ENCODE measurements at regions of chr5 and their contacts with region 1.

Region 1: GRCh38 chr5:172714491-172715421 is 56.2 kb downstream of the DUSP1 start:
- DNase-seq: peak; percentile 67
- ATAC-seq: peak; percentile 88
- H3K4me3 ChIP-seq: no peak overlapping the region
- H3K27ac ChIP-seq: no peak overlapping the region
- H3K4me1 ChIP-seq: peaks cover 0 to 15% of the 10 kb centered on the region in 2 experiments; a peak in 2 of 4 replicates
- H3K27me3 ChIP-seq: no peaks in the 10 kb centered on the region; the same call in 1 of the 2 replicates
- CTCF ChIP-seq: peak in 2 of 3 experiments; percentile 87 to 92; a peak in 4 of 6 replicates
- POLR2A ChIP-seq: no peak
- RAD21 ChIP-seq: no peak

Region 2: GRCh38 chr5:172770675-172771438 is 56.1 kb after region 1 on chr5 and contains the start of gene DUSP1:
- CTCF ChIA-PET with region 1: interaction called, 19 read pairs
- POLR2A ChIA-PET with region 1: interaction called, 16 read pairs
- RAD21 ChIA-PET with region 1: interaction called in 1 of 2 experiments, 4 read pairs
- intact Hi-C with region 1: no loop called
- DNase-seq: peak; percentile 89
- ATAC-seq: peak; percentile 74
- H3K4me3 ChIP-seq: peak within 1 kb of the TSS; percentile 79 to 84
- H3K27ac ChIP-seq: peak within 1 kb of the TSS; percentile 86
- H3K4me1 ChIP-seq: peaks cover 27 to 44% of the 10 kb centered on the region in 2 experiments
- H3K27me3 ChIP-seq: no peaks in the 10 kb centered on the region
- CTCF ChIP-seq: peak in 2 of 3 experiments; percentile 35 to 39; a peak in 2 of 6 replicates
- POLR2A ChIP-seq: peak; percentile 97
- RAD21 ChIP-seq: no peak
- total RNA-seq, gene DUSP1: 16.6 TPM

Region 3: GRCh38 chr5:172910828-172911627 is 196.3 kb after region 1 on chr5:
- CTCF ChIA-PET with region 1: interaction called, 4 read pairs
- POLR2A ChIA-PET with region 1: interaction called, 3 read pairs
- RAD21 ChIA-PET with region 1: no interaction called
- intact Hi-C with region 1: loop called (anchors 2 kb)
- DNase-seq: peak; percentile 21
- ATAC-seq: peak; percentile 77
- H3K4me3 ChIP-seq: no peak overlapping the region
- H3K27ac ChIP-seq: no peak overlapping the region
- H3K4me1 ChIP-seq: no peaks in the 10 kb centered on the region
- H3K27me3 ChIP-seq: no peaks in the 10 kb centered on the region
- CTCF ChIP-seq: peak in 2 of 3 experiments; percentile 25 to 49; a peak in 3 of 6 replicates
- POLR2A ChIP-seq: no peak
- RAD21 ChIP-seq: no peak

Region 4: DNA sequence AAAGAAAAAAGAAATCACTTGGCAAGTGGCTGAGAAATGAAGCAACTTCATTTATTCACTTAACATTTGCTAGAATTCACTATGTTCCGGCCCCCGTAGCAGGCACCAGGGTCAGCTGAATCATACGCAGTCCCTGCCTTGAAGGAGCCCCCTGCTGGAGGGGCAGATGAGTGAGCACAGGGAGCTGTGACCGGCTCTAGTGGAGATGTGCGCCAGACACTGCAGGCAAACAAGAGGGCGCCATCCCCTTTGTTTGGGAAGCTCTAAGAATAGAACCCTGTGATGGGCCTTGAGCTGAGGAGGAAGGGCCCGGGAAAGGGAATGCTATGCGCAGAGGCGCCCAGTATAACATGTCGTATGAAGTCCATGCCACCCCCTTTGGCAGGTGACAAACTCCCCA is 224.3 kb after region 1 on chr5:
- CTCF ChIA-PET with region 1: interaction called, 28 read pairs
- POLR2A ChIA-PET with region 1: interaction called, 5 read pairs
- RAD21 ChIA-PET with region 1: interaction called, 8 to 10 read pairs
- intact Hi-C with region 1: no loop called
- DNase-seq: peak; percentile 26
- ATAC-seq: peak; percentile 90
- H3K4me3 ChIP-seq: no peak overlapping the region
- H3K27ac ChIP-seq: no peak overlapping the region
- H3K4me1 ChIP-seq: no peaks in the 10 kb centered on the region
- H3K27me3 ChIP-seq: no peaks in the 10 kb centered on the region
- CTCF ChIP-seq: peak; percentile 68 to 95 (median 70)
- POLR2A ChIP-seq: no peak
- RAD21 ChIP-seq: peak; percentile 62

Region 5: GRCh38 chr5:173984218-173984617 is 1269.5 kb after region 1 on chr5:
- CTCF ChIA-PET with region 1: no interaction called
- POLR2A ChIA-PET with region 1: no interaction called
- RAD21 ChIA-PET with region 1: no interaction called
- intact Hi-C with region 1: loop called (anchors 10 kb)
- DNase-seq: peak; percentile 34
- ATAC-seq: peak; percentile 83
- H3K4me3 ChIP-seq: no peak overlapping the region
- H3K27ac ChIP-seq: no peak overlapping the region
- H3K4me1 ChIP-seq: no peaks in the 10 kb centered on the region
- H3K27me3 ChIP-seq: peaks cover 7% of the 10 kb centered on the region; the same call in 1 of the 2 replicates
- CTCF ChIP-seq: peak; percentile 42 to 65 (median 58); a peak in 5 of 6 replicates
- POLR2A ChIP-seq: no peak
- RAD21 ChIP-seq: peak; percentile 81